ENCODE measurements at regions of chr2 and their contacts with region 1.

Region 1: DNA sequence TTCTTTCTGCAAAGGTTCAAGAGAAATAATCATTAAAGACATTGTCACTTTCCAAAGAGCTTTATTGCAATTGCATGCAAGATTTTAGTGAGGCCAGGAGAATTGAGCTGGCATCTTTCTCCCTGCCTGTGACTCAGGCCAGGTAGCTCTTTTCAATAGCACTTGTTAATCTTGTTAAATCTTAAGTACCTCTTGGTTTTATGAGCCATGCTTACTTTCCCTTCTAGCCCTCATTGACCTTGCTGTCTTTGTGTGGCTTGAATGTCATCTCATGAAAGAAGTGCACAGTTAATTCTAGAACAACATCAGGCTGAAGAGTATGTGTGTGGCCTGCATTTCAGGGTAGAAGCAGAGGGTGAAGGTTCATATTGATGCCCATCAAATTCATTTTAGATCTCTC is 14.8 kb upstream of the LGALSL start:
- DNase-seq: no peak
- ATAC-seq: no peak
- H3K4me3 ChIP-seq: no peak overlapping the region
- H3K27ac ChIP-seq: no peak overlapping the region
- H3K4me1 ChIP-seq: no peaks in the 10 kb centered on the region
- H3K27me3 ChIP-seq: peaks cover 14% of the 10 kb centered on the region
- CTCF ChIP-seq: no peak

Region 2: GRCh38 chr2:64453770-64454385 is 14.7 kb after region 1 on chr2 and contains the start of gene LGALSL:
- CTCF ChIA-PET with region 1: no interaction called
- POLR2A ChIA-PET with region 1: no interaction called
- in situ Hi-C with region 1: no loop called
- intact Hi-C with region 1: loop called (anchors 1 kb)
- DNase-seq: no peak
- ATAC-seq: peak; percentile 92
- H3K4me3 ChIP-seq: peak within 1 kb of the TSS; percentile 56 to 59
- H3K27ac ChIP-seq: no peak within 1 kb of the TSS
- H3K4me1 ChIP-seq: 0 out of 2 replicates have a peak, but pooled peaks cover 5% of the 10 kb centered on the region
- H3K27me3 ChIP-seq: no peaks in the 10 kb centered on the region
- CTCF ChIP-seq: no peak
- total RNA-seq, gene LGALSL: 5.3 TPM

Region 3: GRCh38 chr2:64586883-64587481 is 147.8 kb after region 1 on chr2:
- CTCF ChIA-PET with region 1: no interaction called
- POLR2A ChIA-PET with region 1: interaction called, 11 read pairs
- in situ Hi-C with region 1: no loop called
- intact Hi-C with region 1: no loop called
- DNase-seq: peak; percentile 36
- ATAC-seq: no peak
- H3K4me3 ChIP-seq: no peak overlapping the region
- H3K27ac ChIP-seq: no peak overlapping the region
- H3K4me1 ChIP-seq: no peaks in the 10 kb centered on the region
- H3K27me3 ChIP-seq: no peaks in the 10 kb centered on the region
- CTCF ChIP-seq: peak; percentile 68; the same call in 1 of the 2 replicates

Region 4: DNA sequence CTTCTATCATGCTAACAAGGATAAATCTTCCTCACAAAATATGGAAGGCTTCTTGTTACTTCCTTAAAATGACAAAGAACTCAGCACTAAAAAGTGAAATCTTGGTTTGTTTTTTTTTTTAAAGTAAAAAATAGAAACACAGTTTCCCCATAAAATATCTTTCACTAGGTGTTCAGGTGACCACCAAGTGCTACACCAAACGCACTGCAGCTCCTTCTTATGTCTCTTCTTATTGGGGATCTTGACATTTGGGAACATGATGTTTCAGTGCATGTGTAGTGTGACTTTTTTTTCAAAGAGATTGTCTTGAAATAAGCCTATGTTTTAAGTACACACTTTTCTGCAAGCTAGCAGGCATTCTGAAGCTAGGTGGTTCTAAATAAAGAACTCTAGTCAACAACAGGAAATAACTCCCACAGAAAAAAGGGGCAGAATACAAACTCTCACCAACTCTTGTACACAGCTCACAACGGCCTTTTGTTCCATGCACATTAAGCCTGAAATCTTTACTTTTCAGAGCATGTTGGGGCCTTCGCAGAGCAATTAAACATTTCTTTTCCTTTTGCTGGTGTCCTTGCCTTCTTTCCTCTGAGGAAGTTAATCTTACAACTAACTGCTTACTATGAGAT is 227.7 kb after region 1 on chr2:
- CTCF ChIA-PET with region 1: no interaction called
- POLR2A ChIA-PET with region 1: no interaction called
- in situ Hi-C with region 1: no loop called
- intact Hi-C with region 1: no loop called
- DNase-seq: no peak
- ATAC-seq: no peak
- H3K4me3 ChIP-seq: no peak overlapping the region
- H3K27ac ChIP-seq: no peak overlapping the region
- H3K4me1 ChIP-seq: no peaks in the 10 kb centered on the region
- H3K27me3 ChIP-seq: no peaks in the 10 kb centered on the region
- CTCF ChIP-seq: no peak

Measured in Panc1 (cell line).